A549 (cell line): ENCODE measurements at regions of chr15 and their contacts with region 1.

Region 1: GRCh38 chr15:91535856-91536500 is 317.5 kb upstream of the SLCO3A1 start:
- DNase-seq: peak; percentile 25 to 58
- ATAC-seq: peak; percentile 58 to 64; a peak in 5 of 6 replicates
- H3K4me3 ChIP-seq: no peak overlapping the region
- H3K27ac ChIP-seq: peak overlapping the region; percentile 83 to 88
- H3K4me1 ChIP-seq: peaks cover 40% of the 10 kb centered on the region
- CTCF ChIP-seq: no peak
- EP300 ChIP-seq: no peak; a peak in 1 of 5 replicates
- POLR2A ChIP-seq: no peak
- RAD21 ChIP-seq: no peak

Region 2: DNA sequence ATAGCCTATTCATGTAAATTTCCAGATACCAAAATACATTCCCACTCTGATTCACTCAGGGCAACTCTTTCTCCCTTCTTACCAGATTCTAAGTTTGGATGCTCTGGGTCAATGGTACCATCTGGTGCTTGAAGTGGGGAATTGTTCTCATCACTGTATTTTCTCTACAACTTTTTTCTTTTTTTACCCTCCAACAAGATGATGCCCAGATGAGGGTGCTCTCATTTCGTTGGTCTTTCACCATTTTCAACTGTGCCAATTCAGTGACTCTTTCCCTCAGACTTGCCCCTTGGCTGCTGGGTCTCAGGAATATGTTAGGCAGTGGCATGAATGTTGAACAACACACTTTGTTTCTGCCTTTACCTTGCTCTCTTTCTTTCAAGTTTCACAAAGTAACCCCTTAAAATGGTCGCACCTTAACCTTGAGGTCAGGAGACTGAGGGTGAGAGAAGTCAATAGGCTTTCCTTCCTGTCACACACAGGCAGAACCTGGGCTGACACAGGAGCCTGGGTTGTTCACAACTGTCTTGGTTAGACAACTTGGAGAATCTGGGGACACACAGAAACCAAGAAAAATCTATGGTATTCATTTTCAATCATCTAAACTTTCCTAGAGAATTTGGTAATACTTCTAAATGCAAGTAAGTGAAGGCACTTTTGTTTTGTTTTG is 13.2 kb before region 1 on chr15:
- CTCF ChIA-PET with region 1: interaction called, 11 read pairs
- POLR2A ChIA-PET with region 1: no interaction called
- DNase-seq: peak in 1 of 2 experiments; percentile 59
- ATAC-seq: peak; percentile 60 to 77; a peak in 3 of 6 replicates
- H3K4me3 ChIP-seq: no peak overlapping the region
- H3K27ac ChIP-seq: no peak overlapping the region
- H3K4me1 ChIP-seq: peaks cover 9% of the 10 kb centered on the region; the same call in 2 of the 3 replicates
- CTCF ChIP-seq: peak; percentile 65
- EP300 ChIP-seq: no peak
- POLR2A ChIP-seq: no peak
- RAD21 ChIP-seq: peak; percentile 73 to 86

Region 3: GRCh38 chr15:91561371-91562100 is 25.6 kb after region 1 on chr15:
- CTCF ChIA-PET with region 1: interaction called, 6 read pairs
- POLR2A ChIA-PET with region 1: interaction called, 10 read pairs
- DNase-seq: peak in 1 of 2 experiments; percentile 63
- ATAC-seq: peak; percentile 78 to 91
- H3K4me3 ChIP-seq: no peak overlapping the region
- H3K27ac ChIP-seq: peak overlapping the region in 1 of 2 experiments; percentile 8; a peak in 2 of 6 replicates
- H3K4me1 ChIP-seq: peaks cover 13% of the 10 kb centered on the region
- CTCF ChIP-seq: no peak
- EP300 ChIP-seq: no peak
- POLR2A ChIP-seq: no peak
- RAD21 ChIP-seq: no peak